IMR-90 (cell line): ENCODE measurements at regions of chr2 and their contacts with region 1.

Region 1: DNA sequence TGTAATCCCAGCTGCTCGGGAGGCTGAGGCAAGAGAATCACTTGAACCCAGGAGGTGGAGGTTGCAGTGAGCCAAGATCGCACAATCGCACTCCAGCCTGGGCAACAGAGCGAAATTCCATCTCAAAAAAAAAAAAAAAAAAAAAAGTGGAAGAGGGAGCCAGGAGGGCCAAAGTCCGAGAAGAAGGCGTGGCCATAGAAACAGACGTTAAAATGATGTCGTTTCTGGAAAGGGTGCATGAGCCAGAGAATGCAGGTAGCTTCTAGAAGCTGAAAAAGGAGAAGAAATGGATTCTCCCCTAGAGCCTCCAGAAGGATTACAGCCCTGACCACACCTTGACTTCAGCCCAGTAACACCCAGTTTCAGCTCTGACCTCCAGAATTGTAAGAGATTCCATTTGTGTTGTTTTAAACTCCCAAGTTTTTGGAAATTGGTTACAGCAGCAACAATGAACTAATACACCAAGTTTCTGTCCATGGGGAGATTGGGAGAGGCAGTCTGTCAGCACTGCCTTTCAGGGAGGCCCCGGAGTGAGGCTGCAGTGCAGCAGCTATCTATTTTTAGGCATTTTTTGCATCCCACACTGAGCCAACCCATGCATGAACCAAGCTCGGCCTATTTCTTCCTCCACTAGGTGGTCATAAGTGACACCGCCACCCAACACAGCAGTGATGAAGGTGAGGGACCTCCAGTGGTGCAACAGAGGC is 14.2 kb upstream of the TRAF3IP1 start:
- DNase-seq: no peak
- ATAC-seq: no peak
- H3K4me3 ChIP-seq: no peak overlapping the region
- H3K27ac ChIP-seq: no peak overlapping the region
- H3K4me1 ChIP-seq: no peaks in the 10 kb centered on the region
- H3K27me3 ChIP-seq: peaks cover 19% of the 10 kb centered on the region
- CTCF ChIP-seq: no peak
- POLR2A ChIP-seq: no peak
- RAD21 ChIP-seq: no peak

Region 2: GRCh38 chr2:238106686-238107524 is 199.2 kb before region 1 on chr2:
- CTCF ChIA-PET with region 1: no interaction called
- POLR2A ChIA-PET with region 1: interaction called, 14 read pairs
- dilution Hi-C with region 1: no loop called
- in situ Hi-C with region 1: no loop called
- intact Hi-C with region 1: no loop called
- DNase-seq: no peak
- ATAC-seq: no peak
- H3K4me3 ChIP-seq: no peak overlapping the region
- H3K27ac ChIP-seq: no peak overlapping the region
- H3K4me1 ChIP-seq: no peaks in the 10 kb centered on the region
- H3K27me3 ChIP-seq: no peaks in the 10 kb centered on the region; the same call in 1 of the 2 replicates
- CTCF ChIP-seq: 0 out of 2 replicates have a peak, but pooled peaks have one; percentile 16
- POLR2A ChIP-seq: no peak
- RAD21 ChIP-seq: peak; percentile 32